ENCODE measurements at regions of chr1 and their contacts with region 1.

Region 1: DNA sequence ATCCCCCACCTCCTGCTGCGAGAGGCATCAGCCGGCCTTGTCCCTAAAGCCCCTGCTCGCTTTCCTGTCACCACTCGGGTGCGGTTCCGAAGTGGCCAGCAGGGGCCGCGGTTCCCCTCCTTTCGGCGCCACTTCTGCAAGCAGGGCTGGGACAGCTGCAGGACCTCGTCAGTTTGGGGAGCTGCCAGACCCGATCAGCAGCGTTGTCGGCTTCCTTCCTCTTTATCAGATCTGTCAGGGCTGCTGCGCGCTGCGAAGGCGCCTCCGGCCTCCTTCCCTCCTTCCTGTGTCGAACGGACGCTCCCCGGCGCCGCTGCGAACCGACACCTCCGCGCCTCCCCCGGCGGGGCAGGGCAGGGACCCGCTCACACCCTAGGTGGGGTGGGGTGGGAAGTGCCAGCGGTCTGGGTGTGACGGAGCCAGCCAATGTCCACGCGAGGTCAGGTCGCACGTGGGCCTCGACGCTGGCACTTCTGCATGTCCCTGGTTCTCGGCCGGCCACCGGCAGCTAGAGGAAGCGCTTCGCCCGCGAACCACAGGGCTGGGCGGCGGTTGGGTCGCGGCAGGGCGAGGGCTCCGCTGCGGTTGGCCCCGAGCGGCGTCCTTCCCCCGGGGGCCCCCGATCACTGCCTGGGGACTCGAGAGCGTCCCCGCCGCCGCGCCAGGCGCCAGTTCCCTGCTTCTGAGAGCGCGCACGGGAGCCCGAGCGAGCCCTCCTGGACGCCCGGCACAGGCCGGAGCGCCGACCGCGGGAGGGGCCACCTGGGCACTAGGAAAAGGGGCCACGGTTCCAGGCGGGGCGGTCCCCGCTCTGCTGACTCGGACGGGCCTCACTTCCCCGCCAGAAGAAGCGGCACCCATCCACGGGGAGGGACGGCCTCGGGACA is 81.8 kb downstream of the RUNX3 start:
- DNase-seq: peak; percentile 91 to 98 (median 96)
- H3K4me3 ChIP-seq: peak overlapping the region in 2 of 4 donors; percentile 29 to 59
- H3K27ac ChIP-seq: peak overlapping the region in 4 of 5 donors; percentile 63 to 83 (median 74)
- H3K4me1 ChIP-seq: peaks cover 5 to 14% of the 10 kb centered on the region in 2 donors
- H3K27me3 ChIP-seq: no peaks in the 10 kb centered on the region
- CTCF ChIP-seq: peak; percentile 91 to 98 (median 96)
- POLR2A ChIP-seq: no peak

Region 2: GRCh38 chr1:24438423-24438901 is 409.8 kb before region 1 on chr1:
- intact Hi-C with region 1: no loop called
- DNase-seq: peak in 1 of 7 donors; percentile 62
- H3K4me3 ChIP-seq: no peak overlapping the region
- H3K27ac ChIP-seq: peak overlapping the region in 1 of 5 donors; percentile 34
- H3K4me1 ChIP-seq: no peaks in the 10 kb centered on the region
- H3K27me3 ChIP-seq: no peaks in the 10 kb centered on the region
- CTCF ChIP-seq: no peak
- POLR2A ChIP-seq: no peak

Region 3: DNA sequence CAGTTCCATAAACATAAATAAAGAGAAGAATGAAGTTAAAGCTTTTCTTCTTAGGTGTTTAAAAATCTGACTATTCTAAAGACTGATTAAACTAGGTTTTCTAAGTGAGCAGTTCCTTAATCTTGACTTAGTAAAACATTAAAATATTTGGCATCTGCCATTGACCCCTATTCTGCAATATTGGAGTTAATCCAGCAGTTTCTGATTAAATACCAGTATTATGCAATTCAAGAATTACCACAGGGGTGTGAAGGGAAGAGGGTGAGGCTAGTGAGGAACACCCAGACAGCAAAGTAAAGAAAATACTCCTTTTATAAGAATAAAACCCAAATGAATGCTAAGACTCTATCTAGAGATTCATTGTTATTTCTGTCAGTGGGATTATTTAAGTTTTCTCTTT is 62.0 kb before region 1 on chr1:
- intact Hi-C with region 1: no loop called
- DNase-seq: no peak
- H3K4me3 ChIP-seq: no peak overlapping the region
- H3K27ac ChIP-seq: peak overlapping the region in 2 of 5 donors; percentile 4 to 59
- H3K4me1 ChIP-seq: peaks cover 25 to 44% of the 10 kb centered on the region in 2 donors
- H3K27me3 ChIP-seq: no peaks in the 10 kb centered on the region
- CTCF ChIP-seq: no peak
- POLR2A ChIP-seq: no peak

Region 4: DNA sequence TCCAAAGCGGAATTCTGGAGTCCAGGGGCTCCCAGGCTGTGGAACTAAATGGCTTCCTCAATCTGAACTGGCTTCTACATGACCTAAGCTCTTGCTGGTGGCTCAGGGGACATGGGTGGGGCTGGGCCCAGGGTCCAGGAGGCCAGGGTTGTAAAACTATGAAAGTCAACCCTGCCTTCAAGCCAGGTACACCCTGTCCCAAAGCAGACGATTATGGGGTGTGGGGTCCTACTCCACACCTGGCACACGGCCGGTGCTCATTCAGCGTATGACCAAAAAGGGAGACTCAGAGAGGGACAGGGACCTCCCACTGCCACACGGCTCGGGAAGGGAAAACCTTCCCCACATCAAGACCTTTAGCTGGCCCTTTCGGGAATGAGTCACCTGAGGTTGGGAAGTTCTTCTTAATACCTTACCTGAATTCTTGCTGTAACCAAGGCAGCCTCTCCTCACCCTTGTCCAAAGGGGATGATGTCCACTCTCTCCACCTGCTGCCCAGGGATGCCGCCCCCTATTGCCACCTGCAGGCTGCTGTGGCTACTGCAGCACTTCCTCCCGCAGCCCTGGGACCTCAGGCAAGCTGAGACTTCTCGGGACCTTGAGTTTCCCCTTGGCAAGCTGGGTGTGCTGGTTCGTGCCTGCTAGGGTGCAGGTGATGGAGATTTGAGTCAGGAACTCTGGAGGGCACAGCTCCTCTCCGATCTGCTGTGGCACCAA is 49.7 kb after region 1 on chr1:
- intact Hi-C with region 1: loop called in 1 of 2 experiments (anchors 5 kb)
- DNase-seq: peak; percentile 31 to 69 (median 59)
- H3K4me3 ChIP-seq: no peak overlapping the region
- H3K27ac ChIP-seq: no peak overlapping the region
- H3K4me1 ChIP-seq: no peaks in the 10 kb centered on the region
- H3K27me3 ChIP-seq: peaks cover 16% of the 10 kb centered on the region
- CTCF ChIP-seq: peak; percentile 54 to 69 (median 62)
- POLR2A ChIP-seq: no peak

Region 5: GRCh38 chr1:25037174-25038074 is 189.2 kb after region 1 on chr1:
- intact Hi-C with region 1: loop called in 1 of 2 experiments (anchors 10 kb)
- DNase-seq: peak in 6 of 7 donors; percentile 31 to 59 (median 40)
- H3K4me3 ChIP-seq: no peak overlapping the region
- H3K27ac ChIP-seq: no peak overlapping the region
- H3K4me1 ChIP-seq: no peaks in the 10 kb centered on the region
- H3K27me3 ChIP-seq: peaks cover 5% of the 10 kb centered on the region
- CTCF ChIP-seq: peak; percentile 38 to 68 (median 60)
- POLR2A ChIP-seq: no peak

Region 6: DNA sequence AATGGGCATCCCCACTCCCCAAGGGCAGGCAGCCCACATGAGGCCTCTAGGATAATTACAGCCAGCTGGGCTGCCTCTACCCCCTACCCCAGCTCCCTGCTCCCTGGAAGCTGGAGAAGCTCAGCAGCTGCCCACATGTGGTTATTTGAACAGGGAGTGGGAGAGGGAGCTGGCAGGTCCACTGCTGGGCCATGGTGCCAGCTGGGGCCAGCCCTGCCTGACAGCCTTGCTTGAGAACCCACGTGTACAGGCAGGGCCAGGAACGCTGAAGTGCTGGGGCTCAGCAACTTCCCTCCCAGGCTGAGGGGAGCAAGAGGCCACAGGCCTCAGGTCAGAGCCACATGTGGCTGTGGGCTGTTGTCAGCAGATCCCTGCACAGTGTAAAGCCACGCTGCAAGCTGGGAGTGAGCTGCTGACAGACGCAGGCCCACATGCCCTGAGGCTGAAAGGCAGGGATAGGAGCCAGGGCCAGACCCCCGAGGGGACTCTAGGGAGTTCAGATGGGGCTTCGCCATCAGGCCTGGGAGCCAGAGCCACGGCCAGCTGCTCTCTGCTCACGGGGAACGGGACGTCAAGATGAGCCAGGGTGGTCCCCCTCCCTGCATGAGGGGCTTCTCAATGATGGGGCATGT is 255.0 kb after region 1 on chr1:
- intact Hi-C with region 1: loop called (anchors 5 kb)
- DNase-seq: no peak
- H3K4me3 ChIP-seq: no peak overlapping the region
- H3K27ac ChIP-seq: no peak overlapping the region
- H3K4me1 ChIP-seq: no peaks in the 10 kb centered on the region
- H3K27me3 ChIP-seq: peaks cover 6% of the 10 kb centered on the region
- CTCF ChIP-seq: no peak
- POLR2A ChIP-seq: no peak

Region 7: DNA sequence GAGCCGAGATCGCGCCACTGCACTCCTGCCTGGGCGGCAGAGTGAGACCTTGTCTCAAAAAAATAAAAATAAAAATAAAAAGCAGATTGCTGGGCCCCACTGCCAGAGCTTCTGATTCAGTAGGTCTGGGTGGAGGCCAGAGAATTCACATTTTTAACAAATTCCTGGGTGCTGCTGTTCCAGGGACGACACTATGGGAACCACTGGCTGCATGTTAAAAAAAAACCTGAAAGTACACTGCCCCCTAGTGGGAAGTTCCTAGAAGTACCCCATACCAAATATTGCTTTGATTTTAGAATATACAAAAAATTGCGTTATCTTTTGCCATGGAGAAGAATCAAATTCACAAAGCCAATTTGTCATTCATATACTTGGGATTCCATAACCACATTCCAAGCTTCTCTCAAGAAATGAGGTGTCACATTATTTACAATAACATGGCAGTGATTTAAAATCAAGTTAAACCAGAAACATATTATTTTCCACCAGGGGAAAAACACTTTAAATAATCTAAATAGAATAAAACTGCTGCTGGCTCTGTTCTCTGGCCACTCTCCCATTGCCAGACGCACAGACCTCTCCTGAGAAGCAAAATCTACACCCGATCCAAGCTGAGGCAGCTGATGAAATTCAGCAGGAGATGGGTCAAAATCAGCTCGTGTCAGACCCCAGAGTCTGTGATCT is 356.7 kb after region 1 on chr1:
- intact Hi-C with region 1: loop called (anchors 5 to 10 kb)
- DNase-seq: peak in 4 of 7 donors; percentile 22 to 49 (median 31)
- H3K4me3 ChIP-seq: no peak overlapping the region
- H3K27ac ChIP-seq: no peak overlapping the region
- H3K4me1 ChIP-seq: no peaks in the 10 kb centered on the region
- H3K27me3 ChIP-seq: no peaks in the 10 kb centered on the region
- CTCF ChIP-seq: peak; percentile 48 to 84 (median 66)
- POLR2A ChIP-seq: no peak